IMR-90 (cell line): ENCODE measurements at regions of chr17 and their contacts with region 1.

Region 1: DNA sequence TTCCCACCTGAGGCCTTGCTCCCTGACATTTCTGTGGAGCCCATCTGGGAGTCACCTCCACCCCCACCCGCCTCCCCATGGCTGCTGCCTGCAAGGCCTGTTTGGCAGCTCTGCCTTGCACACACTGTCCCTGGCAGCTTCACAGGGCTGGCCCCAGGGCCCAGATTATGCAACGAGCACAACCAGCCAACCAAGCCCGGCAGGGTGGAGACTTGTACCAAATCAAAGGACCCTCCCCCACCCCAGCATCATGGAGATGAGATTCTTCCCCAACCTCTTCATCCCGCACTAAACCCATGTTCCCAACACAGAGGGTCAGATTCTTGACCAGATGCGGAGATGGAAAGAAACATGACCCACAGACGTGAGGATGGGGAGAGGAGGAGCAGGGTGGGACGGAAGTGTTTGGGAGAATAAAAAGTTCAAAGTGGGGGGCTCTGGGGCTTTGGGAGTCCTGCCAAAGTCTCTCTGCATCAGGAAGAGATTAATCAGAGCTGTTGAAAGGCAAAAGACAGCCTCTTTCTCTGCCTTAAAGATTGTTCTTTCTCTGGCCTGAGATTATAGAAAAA is 3.8 kb downstream of the SMARCD2 start:
- DNase-seq: peak; percentile 45
- ATAC-seq: no peak
- H3K4me3 ChIP-seq: no peak overlapping the region
- H3K27ac ChIP-seq: peak overlapping the region; percentile 44; the same call in 1 of the 2 replicates
- H3K4me1 ChIP-seq: peaks cover 21% of the 10 kb centered on the region
- H3K27me3 ChIP-seq: no peaks in the 10 kb centered on the region
- CTCF ChIP-seq: no peak
- POLR2A ChIP-seq: no peak
- RAD21 ChIP-seq: no peak

Region 2: GRCh38 chr17:63722403-63722802 is 116.3 kb before region 1 on chr17:
- CTCF ChIA-PET with region 1: no interaction called
- POLR2A ChIA-PET with region 1: no interaction called
- dilution Hi-C with region 1: no loop called
- in situ Hi-C with region 1: no loop called
- intact Hi-C with region 1: no loop called
- DNase-seq: peak; percentile 27
- ATAC-seq: peak; percentile 46; the same call in 1 of the 2 replicates
- H3K4me3 ChIP-seq: no peak overlapping the region
- H3K27ac ChIP-seq: no peak overlapping the region
- H3K4me1 ChIP-seq: no peaks in the 10 kb centered on the region; the same call in 1 of the 2 replicates
- H3K27me3 ChIP-seq: no peaks in the 10 kb centered on the region
- CTCF ChIP-seq: no peak
- POLR2A ChIP-seq: no peak
- RAD21 ChIP-seq: no peak

Region 3: GRCh38 chr17:64262417-64263260 is 424.0 kb after region 1 on chr17 and contains the start of gene TEX2:
- CTCF ChIA-PET with region 1: no interaction called
- POLR2A ChIA-PET with region 1: no interaction called
- dilution Hi-C with region 1: no loop called
- in situ Hi-C with region 1: no loop called
- intact Hi-C with region 1: no loop called
- DNase-seq: no peak
- ATAC-seq: peak; percentile 46
- H3K4me3 ChIP-seq: peak within 1 kb of the TSS; percentile 83
- H3K27ac ChIP-seq: peak within 1 kb of the TSS; percentile 40
- H3K4me1 ChIP-seq: peaks cover 5% of the 10 kb centered on the region
- H3K27me3 ChIP-seq: peaks cover 7% of the 10 kb centered on the region
- CTCF ChIP-seq: no peak
- POLR2A ChIP-seq: peak; percentile 72
- RAD21 ChIP-seq: no peak
- total RNA-seq, gene TEX2: 21.9 and 24.4 TPM in 2 replicates

Region 4: DNA sequence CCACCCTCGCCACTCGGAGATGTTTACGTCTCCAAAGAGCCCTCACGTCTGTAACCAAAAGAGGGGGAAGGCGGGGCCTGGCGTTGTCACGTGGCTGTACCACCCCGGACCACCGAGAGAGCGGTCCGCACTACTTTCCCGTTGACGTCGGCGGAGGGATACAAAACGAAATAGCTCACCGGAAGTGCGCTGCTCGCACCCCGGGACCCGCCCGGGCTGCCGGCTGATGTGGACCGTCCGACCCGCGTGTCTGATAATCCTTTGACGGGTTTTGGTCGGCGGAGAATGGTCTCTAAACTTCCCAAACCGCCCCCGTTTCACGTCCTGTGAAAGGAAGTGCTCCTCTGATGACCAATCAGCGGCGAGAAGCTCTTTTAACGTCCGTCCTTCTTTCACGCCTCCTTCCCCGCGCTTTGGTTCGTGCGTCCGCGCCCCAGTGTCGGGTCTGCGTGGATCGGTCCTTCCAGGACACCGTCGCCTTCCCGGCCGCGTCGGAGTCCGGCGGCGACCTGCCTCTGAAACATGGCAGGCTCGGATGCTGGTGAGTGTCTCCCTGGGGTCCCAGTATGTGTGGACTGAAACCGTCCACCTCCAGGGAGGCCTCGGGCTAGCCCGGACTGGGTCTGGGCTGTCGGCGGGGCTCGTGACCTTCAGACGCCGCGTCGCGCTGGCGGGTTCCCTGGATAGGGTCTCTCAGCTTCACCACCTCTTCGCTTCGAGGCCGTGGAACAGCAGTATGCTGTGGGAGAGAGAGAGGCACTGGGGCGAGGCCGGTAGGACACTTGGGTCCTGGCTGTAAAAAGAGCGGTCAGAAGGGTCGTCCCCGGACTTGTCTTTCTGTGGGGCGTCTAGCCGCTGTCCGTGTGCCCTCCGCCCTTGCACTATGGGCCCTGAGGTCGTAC is 668.1 kb after region 1 on chr17 and contains the start of gene CEP95:
- CTCF ChIA-PET with region 1: no interaction called
- POLR2A ChIA-PET with region 1: interaction called, 10 read pairs
- dilution Hi-C with region 1: no loop called
- in situ Hi-C with region 1: no loop called
- intact Hi-C with region 1: no loop called
- DNase-seq: peak; percentile 98
- ATAC-seq: peak; percentile 70
- H3K4me3 ChIP-seq: peak within 1 kb of the TSS; percentile 93
- H3K27ac ChIP-seq: peak within 1 kb of the TSS; percentile 94
- H3K4me1 ChIP-seq: peaks cover 2% of the 10 kb centered on the region; the same call in 1 of the 2 replicates
- H3K27me3 ChIP-seq: no peaks in the 10 kb centered on the region
- CTCF ChIP-seq: 0 out of 2 replicates have a peak, but pooled peaks have one; percentile 0
- POLR2A ChIP-seq: peak; percentile 87
- RAD21 ChIP-seq: no peak
- total RNA-seq, gene CEP95: 6.1 and 13.3 TPM in 2 replicates